ENCODE measurements at regions of chr7 and their contacts with region 1.

Region 1: DNA sequence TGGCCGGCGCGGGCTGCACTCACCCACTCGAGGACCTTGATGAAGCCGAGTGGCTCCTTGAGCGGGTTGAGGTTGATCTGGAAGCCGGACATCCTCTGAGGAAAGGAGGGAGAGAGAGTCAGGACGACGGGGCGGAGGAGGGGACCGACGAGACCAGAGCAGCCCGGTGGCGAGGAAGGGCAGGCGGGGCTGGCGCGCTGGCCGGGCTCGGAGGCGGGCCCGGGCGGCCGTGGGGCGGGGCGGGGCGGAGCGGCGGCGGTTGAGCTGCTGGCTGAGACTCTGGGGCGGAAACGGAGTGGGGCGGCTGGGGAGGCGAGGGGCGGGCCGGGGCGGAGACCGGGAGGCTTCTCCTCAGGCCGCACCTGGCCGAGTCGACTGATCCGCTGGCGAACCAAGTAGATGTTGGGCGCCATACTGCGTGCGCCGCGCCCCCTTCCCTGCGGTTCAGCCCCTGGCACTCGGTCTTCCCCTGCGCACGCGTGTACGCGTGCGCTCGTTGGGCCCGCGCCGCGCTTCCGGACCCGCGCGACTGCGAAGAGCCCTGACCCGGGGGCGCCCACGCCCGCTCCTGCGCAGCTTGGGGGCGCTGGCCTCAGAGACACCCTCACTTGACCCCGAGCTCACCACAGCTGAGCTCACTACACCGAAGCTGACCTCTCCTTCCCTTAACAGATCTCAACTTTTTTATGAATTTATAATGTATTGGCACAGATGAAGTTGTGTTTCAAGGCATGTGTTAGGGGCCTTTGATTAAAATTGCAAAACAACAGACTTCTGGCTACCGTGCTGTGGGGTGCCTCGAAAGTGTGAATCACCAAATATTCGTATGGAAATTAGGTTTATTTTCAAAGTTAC is at the start of gene SYPL1:
- DNase-seq: peak; percentile 91 to 95 (median 93)
- ATAC-seq: peak; percentile 93
- H3K4me3 ChIP-seq: peak within 1 kb of the TSS; percentile 70
- H3K4me3 Mint-ChIP-seq: peak within 1 kb of the TSS; percentile 78 to 97 (median 92)
- H3K27ac ChIP-seq: peak within 1 kb of the TSS; percentile 83
- H3K27ac Mint-ChIP-seq: peak within 1 kb of the TSS; percentile 90 to 99 (median 96)
- H3K4me1 ChIP-seq: peaks cover 14 to 64% of the 10 kb centered on the region in 2 donors
- H3K4me1 Mint-ChIP-seq: peaks cover 45 to 82% (median 71%) of the 10 kb centered on the region in 7 donors
- H3K27me3 ChIP-seq: no peaks in the 10 kb centered on the region
- H3K27me3 Mint-ChIP-seq: peaks cover 0 to 4% (median 0%) of the 10 kb centered on the region in 5 donors
- total RNA-seq, gene SYPL1: 37.5 to 54.0 (median 46.6) TPM

Region 2: GRCh38 chr7:105531792-105532671 is 580.3 kb before region 1 on chr7 and contains the start of gene RINT1:
- CTCF ChIA-PET with region 1: no interaction called
- POLR2A ChIA-PET with region 1: no interaction called
- intact Hi-C with region 1: loop called (anchors 5 kb)
- DNase-seq: peak; percentile 72 to 90 (median 81)
- ATAC-seq: peak; percentile 97
- H3K4me3 ChIP-seq: peak within 1 kb of the TSS; percentile 86
- H3K4me3 Mint-ChIP-seq: peak within 1 kb of the TSS; percentile 87 to 99 (median 93)
- H3K27ac ChIP-seq: peak within 1 kb of the TSS; percentile 83
- H3K27ac Mint-ChIP-seq: peak within 1 kb of the TSS; percentile 87 to 98 (median 92)
- H3K4me1 ChIP-seq: peaks cover 13 to 18% of the 10 kb centered on the region in 2 donors
- H3K4me1 Mint-ChIP-seq: peaks cover 21 to 59% (median 38%) of the 10 kb centered on the region in 7 donors
- H3K27me3 ChIP-seq: no peaks in the 10 kb centered on the region
- H3K27me3 Mint-ChIP-seq: no peaks in the 10 kb centered on the region
- total RNA-seq, gene RINT1: 23.0 to 31.8 (median 26.0) TPM

Region 3: DNA sequence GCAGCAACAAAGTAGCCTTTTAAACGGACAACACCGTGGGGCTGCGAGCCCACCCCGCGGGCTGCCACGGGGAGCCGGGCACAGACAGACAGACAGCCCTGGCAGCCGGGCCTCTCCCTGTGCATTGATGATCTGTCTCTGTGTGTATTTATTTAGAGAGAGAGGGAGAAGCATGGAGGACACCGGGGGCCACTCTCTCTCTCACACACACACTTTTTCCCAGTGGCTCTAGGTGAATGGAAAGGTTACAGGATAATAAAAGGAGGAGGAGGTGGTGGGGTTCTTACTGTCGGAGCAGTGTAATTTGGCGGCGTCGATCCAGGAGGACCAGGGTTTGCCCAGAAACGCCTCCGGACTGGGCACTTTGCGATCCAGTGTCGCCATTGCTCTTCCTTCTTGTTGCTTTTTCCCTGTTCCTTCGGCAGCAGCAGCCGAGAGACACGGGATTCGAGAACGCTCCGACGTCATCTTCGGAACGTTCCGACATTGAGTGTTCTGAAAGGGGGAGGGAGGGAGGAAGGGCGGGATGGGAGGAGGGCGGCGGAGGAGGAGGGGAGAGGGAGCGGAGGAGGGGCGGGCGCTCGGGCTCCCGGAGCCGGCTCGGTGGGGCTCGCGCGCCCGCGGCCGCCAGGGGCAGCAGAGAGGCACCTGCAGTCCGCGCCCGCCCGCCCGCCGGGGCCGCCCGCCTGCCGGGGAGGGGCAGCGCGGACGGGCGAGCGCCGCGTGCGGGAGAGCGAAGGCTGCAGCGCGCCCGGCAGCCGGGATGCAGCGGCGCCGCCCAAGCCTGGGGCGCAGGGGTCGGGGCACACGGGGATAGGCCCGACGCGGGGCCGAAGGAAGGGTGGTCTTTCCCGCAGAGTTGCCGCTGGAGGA is 236.0 kb before region 1 on chr7 and contains the start of gene ATXN7L1:
- CTCF ChIA-PET with region 1: no interaction called
- POLR2A ChIA-PET with region 1: no interaction called
- intact Hi-C with region 1: loop called (anchors 1 to 2 kb)
- DNase-seq: peak; percentile 75 to 94 (median 87)
- ATAC-seq: peak; percentile 99
- H3K4me3 ChIP-seq: peak within 1 kb of the TSS; percentile 97
- H3K4me3 Mint-ChIP-seq: peak within 1 kb of the TSS; percentile 90 to 100 (median 99)
- H3K27ac ChIP-seq: peak within 1 kb of the TSS; percentile 81
- H3K27ac Mint-ChIP-seq: peak within 1 kb of the TSS; percentile 85 to 99 (median 98)
- H3K4me1 ChIP-seq: peaks cover 10 to 33% of the 10 kb centered on the region in 2 donors
- H3K4me1 Mint-ChIP-seq: peaks cover 34 to 73% (median 52%) of the 10 kb centered on the region in 7 donors
- H3K27me3 ChIP-seq: no peaks in the 10 kb centered on the region
- H3K27me3 Mint-ChIP-seq: peaks cover 0 to 34% (median 0%) of the 10 kb centered on the region in 5 donors
- total RNA-seq, gene ATXN7L1: 18.5 to 52.4 (median 46.7) TPM

Region 4: GRCh38 chr7:105958012-105958411 is 154.3 kb before region 1 on chr7:
- CTCF ChIA-PET with region 1: no interaction called
- POLR2A ChIA-PET with region 1: no interaction called
- intact Hi-C with region 1: no loop called
- DNase-seq: no peak
- ATAC-seq: no peak
- H3K4me3 ChIP-seq: no peak overlapping the region
- H3K4me3 Mint-ChIP-seq: no peak overlapping the region
- H3K27ac ChIP-seq: no peak overlapping the region
- H3K27ac Mint-ChIP-seq: no peak overlapping the region
- H3K4me1 ChIP-seq: no peaks in the 10 kb centered on the region
- H3K4me1 Mint-ChIP-seq: peaks cover 0 to 6% (median 0%) of the 10 kb centered on the region in 7 donors
- H3K27me3 ChIP-seq: no peaks in the 10 kb centered on the region
- H3K27me3 Mint-ChIP-seq: peaks cover 0 to 5% (median 0%) of the 10 kb centered on the region in 5 donors

Region 5: GRCh38 chr7:106071356-106071998 is 40.9 kb before region 1 on chr7:
- CTCF ChIA-PET with region 1: interaction called, 6 read pairs
- POLR2A ChIA-PET with region 1: interaction called, 143 read pairs
- intact Hi-C with region 1: loop called (anchors 1 kb)
- DNase-seq: peak in 8 of 9 donors; percentile 50 to 75 (median 66)
- ATAC-seq: peak; percentile 97
- H3K4me3 ChIP-seq: peak overlapping the region; percentile 70
- H3K4me3 Mint-ChIP-seq: peak overlapping the region; percentile 74 to 84 (median 79)
- H3K27ac ChIP-seq: peak overlapping the region; percentile 80
- H3K27ac Mint-ChIP-seq: peak overlapping the region; percentile 93 to 99 (median 97)
- H3K4me1 ChIP-seq: peaks cover 26 to 49% of the 10 kb centered on the region in 2 donors
- H3K4me1 Mint-ChIP-seq: peaks cover 38 to 75% (median 64%) of the 10 kb centered on the region in 7 donors
- H3K27me3 ChIP-seq: no peaks in the 10 kb centered on the region
- H3K27me3 Mint-ChIP-seq: no peaks in the 10 kb centered on the region

Region 6: DNA sequence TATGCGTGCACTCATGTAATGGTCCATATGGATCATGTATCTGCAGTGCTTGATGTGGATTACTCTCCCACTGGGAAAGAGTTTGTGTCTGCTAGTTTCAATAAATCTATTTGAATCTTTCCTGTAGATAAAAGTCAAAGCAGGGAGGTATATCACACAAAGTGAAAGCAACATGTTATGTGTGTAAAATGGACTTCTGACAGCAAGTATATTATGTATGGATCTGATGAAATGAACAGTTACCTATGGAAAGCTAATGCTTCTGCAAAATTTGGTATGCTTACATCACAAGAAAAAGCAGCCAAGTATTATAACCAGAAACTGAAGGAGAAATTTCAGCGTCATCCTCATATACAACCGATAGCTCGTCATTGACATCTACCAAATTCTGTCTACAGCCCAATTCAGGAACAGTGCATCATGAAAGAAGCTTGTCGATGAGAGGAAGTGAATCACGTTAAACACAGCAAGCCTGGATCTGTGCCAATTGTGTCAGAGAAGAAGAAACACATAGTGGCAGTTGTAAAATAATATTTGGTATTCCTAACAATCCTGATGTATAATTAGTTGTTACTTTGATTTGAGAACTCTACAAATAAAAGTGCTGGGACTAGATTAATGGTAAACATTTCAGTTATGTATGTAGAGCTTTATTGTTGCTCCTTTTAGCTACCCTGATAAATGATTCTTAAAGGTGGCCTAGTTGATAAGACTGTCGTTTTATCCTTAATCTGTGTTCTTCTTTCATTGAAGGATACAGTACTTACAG is 14.0 kb after region 1 on chr7:
- CTCF ChIA-PET with region 1: interaction called, 7 read pairs
- POLR2A ChIA-PET with region 1: interaction called, 71 read pairs
- intact Hi-C with region 1: loop called (anchors 1 kb)
- DNase-seq: peak in 7 of 9 donors; percentile 49 to 76 (median 70)
- ATAC-seq: peak; percentile 89
- H3K4me3 ChIP-seq: peak overlapping the region; percentile 23
- H3K4me3 Mint-ChIP-seq: peak overlapping the region; percentile 9 to 84 (median 78)
- H3K27ac ChIP-seq: no peak overlapping the region
- H3K27ac Mint-ChIP-seq: peak overlapping the region in 8 of 9 donors; percentile 11 to 74 (median 38)
- H3K4me1 ChIP-seq: peaks cover 0 to 8% of the 10 kb centered on the region in 2 donors
- H3K4me1 Mint-ChIP-seq: peaks cover 13 to 34% (median 23%) of the 10 kb centered on the region in 7 donors
- H3K27me3 ChIP-seq: peaks cover 0 to 2% of the 10 kb centered on the region in 2 donors
- H3K27me3 Mint-ChIP-seq: peaks cover 0 to 19% (median 0%) of the 10 kb centered on the region in 5 donors

Region 7: GRCh38 chr7:106659963-106660861 is 547.9 kb after region 1 on chr7:
- CTCF ChIA-PET with region 1: no interaction called
- POLR2A ChIA-PET with region 1: no interaction called
- intact Hi-C with region 1: loop called (anchors 2 to 5 kb)
- DNase-seq: peak; percentile 58 to 84 (median 68)
- ATAC-seq: peak; percentile 72
- H3K4me3 ChIP-seq: peak overlapping the region; percentile 73
- H3K4me3 Mint-ChIP-seq: peak overlapping the region; percentile 85 to 97 (median 91)
- H3K27ac ChIP-seq: peak overlapping the region; percentile 68
- H3K27ac Mint-ChIP-seq: peak overlapping the region; percentile 86 to 97 (median 92)
- H3K4me1 ChIP-seq: peaks cover 13 to 16% of the 10 kb centered on the region in 2 donors
- H3K4me1 Mint-ChIP-seq: peaks cover 0 to 41% (median 29%) of the 10 kb centered on the region in 7 donors
- H3K27me3 ChIP-seq: no peaks in the 10 kb centered on the region
- H3K27me3 Mint-ChIP-seq: peaks cover 0 to 3% (median 0%) of the 10 kb centered on the region in 5 donors

Measured in naive thymus-derived CD4-positive, alpha-beta T cell (primary cell).